ENCODE measurements at regions of chr5 and their contacts with region 1.

Region 1: DNA sequence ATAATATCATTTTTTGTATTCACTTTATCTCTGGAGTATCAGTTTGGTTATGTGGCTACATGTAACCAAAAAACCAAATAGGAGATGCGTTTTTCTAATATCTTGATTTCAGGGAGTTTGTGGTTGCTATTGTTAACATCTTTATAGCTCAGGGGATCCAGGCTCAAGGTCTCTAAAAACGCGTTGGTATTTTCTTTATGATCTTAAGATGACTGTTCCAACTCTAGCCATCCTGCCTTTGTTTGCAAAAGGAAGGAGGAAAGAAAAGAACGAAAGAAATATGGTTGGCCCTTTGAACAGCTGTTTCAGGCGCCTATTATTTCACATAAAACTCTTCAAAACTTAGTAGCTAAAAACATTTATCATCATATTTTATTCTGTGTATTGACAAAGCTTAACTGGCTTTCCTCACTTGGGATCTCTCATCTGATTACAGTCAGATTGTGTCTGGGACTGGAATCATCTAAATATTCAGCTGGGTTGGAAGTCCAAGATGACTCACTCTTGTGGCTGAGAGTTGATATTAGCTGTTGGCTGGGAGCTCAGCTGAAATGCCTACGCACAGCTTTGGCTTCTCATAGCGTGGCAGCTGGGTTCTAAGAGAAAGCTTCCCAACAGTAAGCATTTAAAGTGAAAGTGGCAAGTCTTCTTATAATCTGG is 60.1 kb downstream of the FAM174A start:
- DNase-seq: peak; percentile 97
- ATAC-seq: peak; percentile 99
- H3K4me3 ChIP-seq: peak overlapping the region; percentile 14; the same call in 1 of the 2 replicates
- H3K27ac ChIP-seq: no peak overlapping the region; the same call in 1 of the 2 replicates
- H3K4me1 ChIP-seq: peaks cover 2% of the 10 kb centered on the region; the same call in 1 of the 2 replicates
- H3K27me3 ChIP-seq: no peaks in the 10 kb centered on the region
- CTCF ChIP-seq: no peak
- POLR2A ChIP-seq: no peak
- RAD21 ChIP-seq: no peak

Region 2: DNA sequence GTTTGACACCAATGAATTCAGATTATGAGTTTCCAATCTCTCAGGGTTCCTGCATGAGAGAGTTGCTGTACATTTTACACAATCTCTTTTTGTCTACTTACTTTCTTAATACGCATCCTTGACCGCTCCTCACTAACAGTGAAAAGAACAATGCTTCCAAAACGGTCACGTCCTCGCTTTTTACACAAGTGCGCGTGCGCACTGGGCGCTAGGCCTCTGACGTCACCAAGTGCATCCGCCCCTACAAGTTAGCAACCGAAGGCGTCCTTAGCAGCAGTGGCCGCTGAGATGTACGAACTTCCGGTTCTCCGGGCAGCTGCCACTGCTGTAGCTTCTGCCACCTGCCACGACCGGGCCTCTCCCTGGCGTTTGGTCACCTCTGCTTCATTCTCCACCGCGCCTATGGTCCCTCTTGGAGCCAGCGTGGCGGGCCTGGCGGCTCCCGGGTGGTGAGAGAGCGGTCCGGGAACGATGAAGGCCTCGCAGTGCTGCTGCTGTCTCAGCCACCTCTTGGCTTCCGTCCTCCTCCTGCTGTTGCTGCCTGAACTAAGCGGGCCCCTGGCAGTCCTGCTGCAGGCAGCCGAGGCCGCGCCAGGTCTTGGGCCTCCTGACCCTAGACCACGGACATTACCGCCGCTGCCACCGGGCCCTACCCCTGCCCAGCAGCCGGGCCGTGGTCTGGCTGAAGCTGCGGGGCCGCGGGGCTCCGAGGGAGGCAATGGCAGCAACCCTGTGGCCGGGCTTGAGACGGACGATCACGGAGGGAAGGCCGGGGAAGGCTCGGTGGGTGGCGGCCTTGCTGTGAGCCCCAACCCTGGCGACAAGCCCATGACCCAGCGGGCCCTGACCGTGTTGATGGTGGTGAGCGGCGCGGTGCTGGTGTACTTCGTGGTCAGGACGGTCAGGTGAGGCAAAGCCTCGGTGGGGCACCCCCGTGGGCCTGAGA is 59.9 kb before region 1 on chr5 and contains the start of gene FAM174A:
- CTCF ChIA-PET with region 1: no interaction called
- POLR2A ChIA-PET with region 1: no interaction called
- dilution Hi-C with region 1: no loop called
- in situ Hi-C with region 1: no loop called
- intact Hi-C with region 1: loop called (anchors 1 kb)
- DNase-seq: peak; percentile 96
- ATAC-seq: peak; percentile 96
- H3K4me3 ChIP-seq: peak within 1 kb of the TSS; percentile 87
- H3K27ac ChIP-seq: peak within 1 kb of the TSS; percentile 58
- H3K4me1 ChIP-seq: no peaks in the 10 kb centered on the region
- H3K27me3 ChIP-seq: no peaks in the 10 kb centered on the region
- CTCF ChIP-seq: no peak
- POLR2A ChIP-seq: peak; percentile 85
- RAD21 ChIP-seq: no peak
- total RNA-seq, gene FAM174A: 2.7 and 5.0 TPM in 2 replicates

Measured in IMR-90 (cell line).